HepG2 (cell line): ENCODE measurements at regions of chr7 and their contacts with region 1.

Region 1: DNA sequence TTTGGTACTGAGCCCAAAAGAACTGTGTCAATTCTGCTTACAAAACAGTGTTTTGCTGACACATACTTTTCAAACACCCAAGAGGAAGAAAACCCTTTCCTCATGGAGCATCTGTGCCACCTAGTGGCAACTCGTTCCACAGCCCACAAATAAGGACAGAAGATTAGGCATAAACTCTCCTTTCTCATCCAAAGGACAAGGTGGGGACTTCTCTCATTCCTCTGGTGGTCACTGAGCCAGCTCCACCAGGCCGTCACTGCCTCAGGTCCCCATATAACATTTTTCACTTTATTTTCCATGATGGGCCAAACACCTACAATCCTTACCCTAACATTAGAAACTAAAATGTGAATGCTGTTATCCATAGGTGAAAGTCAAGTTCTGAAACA is 76.9 kb downstream of the RNF216 start:
- DNase-seq: peak; percentile 75
- ATAC-seq: peak; percentile 88
- H3K4me3 ChIP-seq: no peak overlapping the region
- H3K27ac ChIP-seq: no peak overlapping the region
- H3K4me1 ChIP-seq: peaks cover 7% of the 10 kb centered on the region; the same call in 1 of the 2 replicates
- H3K27me3 ChIP-seq: no peaks in the 10 kb centered on the region
- CTCF ChIP-seq: peak; percentile 91
- EP300 ChIP-seq: no peak
- POLR2A ChIP-seq: no peak
- RAD21 ChIP-seq: peak; percentile 70

Region 2: DNA sequence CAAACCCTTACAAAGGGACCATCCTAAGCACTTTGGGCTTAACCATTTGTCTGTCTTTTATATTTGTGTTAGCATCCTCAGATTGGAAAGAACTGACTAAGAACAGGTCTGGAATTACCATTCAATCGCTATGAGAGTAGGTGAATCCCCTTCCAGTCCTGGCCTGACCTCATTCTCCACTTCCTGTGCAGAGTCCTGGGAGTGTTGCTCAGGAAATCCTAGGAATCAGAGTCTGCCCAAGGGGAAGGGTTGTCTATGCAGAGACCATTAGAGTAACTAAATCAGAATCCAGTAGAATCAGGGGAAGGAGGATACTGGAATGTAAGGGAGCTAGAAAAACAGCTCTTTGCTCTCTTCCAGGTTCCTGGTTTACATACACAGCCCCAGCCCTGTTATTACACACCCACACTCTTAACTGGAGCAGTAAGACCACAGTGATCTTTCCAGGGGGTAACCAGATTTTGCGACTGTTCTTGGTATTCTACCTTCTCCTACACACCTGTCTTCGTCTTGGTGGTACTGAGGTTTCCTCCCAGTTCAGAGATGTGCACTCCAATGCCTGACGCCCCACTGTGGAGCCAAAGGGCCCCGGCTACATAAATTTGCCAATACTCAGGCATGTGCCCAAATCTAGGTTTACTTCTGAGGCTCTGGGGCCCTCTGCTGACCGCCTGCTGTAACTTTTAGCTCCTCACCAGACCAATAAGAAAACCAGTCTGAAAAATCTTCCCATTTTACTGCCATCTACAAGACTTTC is 26.8 kb before region 1 on chr7:
- CTCF ChIA-PET with region 1: interaction called, 4 read pairs
- POLR2A ChIA-PET with region 1: no interaction called
- in situ Hi-C with region 1: no loop called
- intact Hi-C with region 1: loop called (anchors 2 kb)
- DNase-seq: peak; percentile 34
- ATAC-seq: peak; percentile 73
- H3K4me3 ChIP-seq: no peak overlapping the region
- H3K27ac ChIP-seq: no peak overlapping the region
- H3K4me1 ChIP-seq: no peaks in the 10 kb centered on the region
- H3K27me3 ChIP-seq: no peaks in the 10 kb centered on the region
- CTCF ChIP-seq: peak; percentile 62
- EP300 ChIP-seq: no peak
- POLR2A ChIP-seq: no peak
- RAD21 ChIP-seq: 0 out of 2 replicates have a peak, but pooled peaks have one; percentile 44